IMR-90 (cell line): ENCODE measurements at regions of chr12 and their contacts with region 1.

Region 1: GRCh38 chr12:21683115-21683514 is 25.5 kb upstream of the LDHB start:
- DNase-seq: no peak
- ATAC-seq: no peak
- H3K4me3 ChIP-seq: no peak overlapping the region
- H3K27ac ChIP-seq: no peak overlapping the region
- H3K4me1 ChIP-seq: no peaks in the 10 kb centered on the region
- H3K27me3 ChIP-seq: peaks cover 3% of the 10 kb centered on the region
- CTCF ChIP-seq: no peak
- POLR2A ChIP-seq: no peak
- RAD21 ChIP-seq: no peak

Region 2: DNA sequence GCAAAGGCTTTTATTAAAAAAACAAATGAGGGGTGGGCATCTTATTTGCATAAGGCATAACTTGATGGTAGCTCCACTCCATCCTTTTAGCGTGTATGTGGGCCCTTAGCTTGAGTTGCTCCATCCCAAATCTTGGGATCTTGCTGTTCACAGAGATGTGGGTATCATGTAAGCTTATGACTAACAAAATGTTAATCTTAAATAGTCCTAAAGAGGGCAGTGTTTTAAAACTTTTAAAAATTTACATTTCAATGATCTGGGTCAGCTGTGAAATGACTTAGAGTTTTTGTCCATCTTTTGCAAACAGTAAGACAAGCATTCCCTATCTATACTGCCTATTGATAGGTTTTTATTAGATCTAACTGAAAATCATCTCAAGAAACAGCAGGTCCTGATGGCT is 434.4 kb before region 1 on chr12:
- CTCF ChIA-PET with region 1: interaction called, 3 read pairs
- POLR2A ChIA-PET with region 1: no interaction called
- dilution Hi-C with region 1: no loop called
- in situ Hi-C with region 1: no loop called
- intact Hi-C with region 1: loop called (anchors 5 kb)
- DNase-seq: no peak
- ATAC-seq: no peak
- H3K4me3 ChIP-seq: no peak overlapping the region
- H3K27ac ChIP-seq: no peak overlapping the region
- H3K4me1 ChIP-seq: no peaks in the 10 kb centered on the region
- H3K27me3 ChIP-seq: no peaks in the 10 kb centered on the region
- CTCF ChIP-seq: 0 out of 2 replicates have a peak, but pooled peaks have one; percentile 14
- POLR2A ChIP-seq: no peak
- RAD21 ChIP-seq: no peak

Region 3: DNA sequence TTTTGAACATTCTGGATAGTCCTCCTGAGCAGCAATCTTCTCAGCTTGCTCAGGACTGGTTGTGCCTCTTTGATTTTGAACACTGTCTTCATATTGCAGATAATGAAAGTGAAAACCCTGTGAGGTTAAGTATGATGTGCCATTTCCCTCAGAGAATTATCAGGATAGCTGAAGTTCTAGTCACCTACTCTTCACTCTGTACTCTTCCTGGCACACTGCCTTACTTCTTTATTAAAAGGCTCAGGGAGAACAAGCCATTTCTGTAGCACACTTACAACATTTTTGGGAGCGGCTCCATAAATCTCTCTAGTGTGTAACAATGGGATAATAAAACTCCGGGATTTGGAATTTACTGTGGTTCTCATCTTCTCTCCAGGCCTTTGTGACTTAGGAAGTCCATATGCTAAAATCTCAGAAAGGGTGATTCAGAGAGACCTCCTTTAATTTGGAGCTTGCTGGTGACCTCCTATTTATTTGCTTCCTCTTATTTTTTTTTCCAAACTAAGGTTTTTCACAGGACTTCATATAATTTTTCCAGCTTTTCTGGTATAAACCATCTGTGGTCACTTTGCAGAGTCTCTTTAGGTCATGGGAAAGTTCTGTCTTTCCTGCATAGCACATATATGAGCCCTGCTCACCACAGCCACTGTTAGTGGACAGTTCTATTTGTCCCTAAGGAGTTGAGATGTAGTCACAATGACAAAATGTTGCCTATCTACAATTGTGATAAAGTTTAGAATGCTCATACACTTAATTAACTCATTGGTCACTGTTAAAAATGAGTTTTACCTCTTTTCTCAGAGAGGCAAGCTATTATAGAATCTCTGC is 28.0 kb after region 1 on chr12:
- CTCF ChIA-PET with region 1: no interaction called
- POLR2A ChIA-PET with region 1: no interaction called
- dilution Hi-C with region 1: no loop called
- in situ Hi-C with region 1: no loop called
- intact Hi-C with region 1: no loop called
- DNase-seq: no peak
- ATAC-seq: no peak
- H3K4me3 ChIP-seq: no peak overlapping the region
- H3K27ac ChIP-seq: no peak overlapping the region
- H3K4me1 ChIP-seq: no peaks in the 10 kb centered on the region
- H3K27me3 ChIP-seq: no peaks in the 10 kb centered on the region
- CTCF ChIP-seq: no peak
- POLR2A ChIP-seq: no peak
- RAD21 ChIP-seq: no peak